CD8-positive, alpha-beta T cell (primary cell): ENCODE measurements at regions of chr3 and their contacts with region 1.

Region 1: GRCh38 chr3:32077260-32078084 is 28.9 kb upstream of the GPD1L start:
- DNase-seq: no peak
- ATAC-seq: no peak
- H3K4me3 ChIP-seq: no peak overlapping the region
- H3K4me3 Mint-ChIP-seq: no peak overlapping the region
- H3K27ac ChIP-seq: no peak overlapping the region
- H3K27ac Mint-ChIP-seq: no peak overlapping the region
- H3K4me1 ChIP-seq: no peaks in the 10 kb centered on the region
- H3K4me1 Mint-ChIP-seq: no peaks in the 10 kb centered on the region
- H3K27me3 ChIP-seq: no peaks in the 10 kb centered on the region
- H3K27me3 Mint-ChIP-seq: peaks cover 8% of the 10 kb centered on the region
- CTCF ChIP-seq: no peak

Region 2: DNA sequence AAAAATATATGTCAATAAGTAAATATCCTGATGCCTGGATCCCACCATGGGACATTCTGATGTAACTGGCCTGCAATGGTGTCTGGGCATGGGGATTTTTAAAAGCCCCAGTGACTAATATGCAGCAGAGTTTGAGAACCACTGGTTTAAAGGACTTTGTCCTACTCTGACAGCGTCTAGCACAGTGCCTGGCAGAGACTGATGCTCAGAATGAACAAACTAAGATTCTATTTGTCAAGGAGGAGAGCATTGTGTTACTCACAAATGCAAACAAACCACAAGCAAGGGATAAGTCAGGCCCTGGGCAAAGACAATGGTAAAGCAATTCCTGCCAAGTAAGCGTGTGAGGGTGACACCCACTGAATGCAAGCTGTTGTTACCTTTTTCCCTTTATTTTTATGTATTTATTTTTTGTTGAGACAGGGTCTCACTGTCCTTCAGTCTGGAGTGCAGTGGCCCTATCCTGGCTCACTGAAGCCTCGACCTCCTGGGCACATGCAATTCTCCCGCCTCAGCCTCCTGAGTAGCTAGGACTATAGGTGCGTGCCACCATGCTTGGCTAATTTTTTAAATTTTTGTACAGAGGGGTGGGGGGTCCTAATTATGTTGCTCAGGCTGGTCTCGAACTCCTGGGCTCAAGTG is 27.9 kb after region 1 on chr3:
- CTCF ChIA-PET with region 1: no interaction called
- POLR2A ChIA-PET with region 1: no interaction called
- intact Hi-C with region 1: no loop called
- DNase-seq: no peak
- ATAC-seq: no peak
- H3K4me3 ChIP-seq: no peak overlapping the region
- H3K4me3 Mint-ChIP-seq: peak overlapping the region; percentile 91
- H3K27ac ChIP-seq: no peak overlapping the region
- H3K27ac Mint-ChIP-seq: no peak overlapping the region
- H3K4me1 ChIP-seq: peaks cover 13% of the 10 kb centered on the region
- H3K4me1 Mint-ChIP-seq: peaks cover 30% of the 10 kb centered on the region
- H3K27me3 ChIP-seq: no peaks in the 10 kb centered on the region
- H3K27me3 Mint-ChIP-seq: no peaks in the 10 kb centered on the region
- CTCF ChIP-seq: no peak

Region 3: DNA sequence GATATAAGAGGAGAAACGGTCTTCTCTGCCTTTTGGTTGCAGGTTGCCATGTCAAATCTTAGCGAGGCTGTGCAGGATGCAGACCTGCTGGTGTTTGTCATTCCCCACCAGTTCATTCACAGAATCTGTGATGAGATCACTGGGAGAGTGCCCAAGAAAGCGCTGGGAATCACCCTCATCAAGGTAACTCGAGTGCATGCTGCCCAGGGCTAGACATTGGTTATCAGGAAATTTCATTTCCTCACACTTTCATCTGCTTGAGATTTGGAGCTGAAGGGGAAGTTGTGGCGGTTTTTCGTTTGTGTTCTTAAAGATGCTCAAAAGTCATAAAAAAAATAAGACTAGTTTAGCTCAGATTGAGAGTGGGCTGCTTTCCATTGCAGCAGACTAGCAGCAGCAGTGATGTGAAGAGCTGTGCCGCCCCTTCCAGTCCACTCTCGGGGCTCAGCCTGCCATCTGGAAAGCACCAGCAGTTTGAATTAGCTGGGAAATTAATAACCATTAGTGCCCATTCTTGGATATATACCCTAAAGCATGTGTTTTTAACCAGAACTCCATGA is 61.2 kb after region 1 on chr3:
- CTCF ChIA-PET with region 1: interaction called, 4 read pairs
- POLR2A ChIA-PET with region 1: no interaction called
- intact Hi-C with region 1: loop called in 1 of 2 experiments (anchors 5 kb)
- DNase-seq: peak in 2 of 9 experiments; percentile 8 to 39
- ATAC-seq: peak; percentile 23
- H3K4me3 ChIP-seq: no peak overlapping the region
- H3K4me3 Mint-ChIP-seq: peak overlapping the region; percentile 19
- H3K27ac ChIP-seq: no peak overlapping the region
- H3K27ac Mint-ChIP-seq: no peak overlapping the region
- H3K4me1 ChIP-seq: peaks cover 14% of the 10 kb centered on the region
- H3K4me1 Mint-ChIP-seq: peaks cover 20% of the 10 kb centered on the region
- H3K27me3 ChIP-seq: no peaks in the 10 kb centered on the region
- H3K27me3 Mint-ChIP-seq: no peaks in the 10 kb centered on the region
- CTCF ChIP-seq: no peak

Region 4: DNA sequence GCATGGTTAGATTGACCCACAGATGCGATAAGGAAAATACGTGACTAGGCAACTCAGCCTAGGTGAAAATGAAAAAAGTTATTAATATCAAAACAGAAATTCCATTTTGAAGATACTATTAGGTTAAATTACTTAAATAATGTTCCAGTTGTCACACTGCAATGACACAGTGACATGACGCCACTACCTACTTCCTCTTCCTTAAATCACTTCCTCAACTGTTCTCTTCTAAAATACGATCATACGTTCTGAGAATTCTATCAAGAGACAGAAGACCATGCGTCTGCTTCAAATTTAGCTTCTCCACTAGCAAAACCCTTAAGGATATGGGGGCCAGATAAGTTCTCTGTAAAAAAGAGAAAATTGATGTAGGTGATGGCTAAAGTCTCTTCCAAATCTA is 407.0 kb after region 1 on chr3:
- CTCF ChIA-PET with region 1: no interaction called
- POLR2A ChIA-PET with region 1: no interaction called
- intact Hi-C with region 1: no loop called
- DNase-seq: peak in 1 of 9 experiments; percentile 37
- ATAC-seq: peak; percentile 29
- H3K4me3 ChIP-seq: no peak overlapping the region
- H3K4me3 Mint-ChIP-seq: no peak overlapping the region
- H3K27ac ChIP-seq: no peak overlapping the region
- H3K27ac Mint-ChIP-seq: peak overlapping the region; percentile 23
- H3K4me1 ChIP-seq: peaks cover 4% of the 10 kb centered on the region
- H3K4me1 Mint-ChIP-seq: peaks cover 21% of the 10 kb centered on the region
- H3K27me3 ChIP-seq: no peaks in the 10 kb centered on the region
- H3K27me3 Mint-ChIP-seq: no peaks in the 10 kb centered on the region
- CTCF ChIP-seq: no peak